Activated T-helper 2 cell treated with anti-CD3 and anti-CD28 coated beads, Interferon-gamma antibody, Interleukin-2, Interleukin-4, amounts not matched to agents 10 μg/mL and 5 μg/mL and 100 μg/mL, durations not matched to agents 14 hours and 24 hours and 36 hours (primary cell): ENCODE measurements at regions of chr10 and their contacts with region 1.

Region 1: GRCh38 chr10:12710594-12711349 is 290.7 kb downstream of the CCDC3 start:
- DNase-seq: peak; percentile 73
- H3K4me3 Mint-ChIP-seq: no peak overlapping the region
- H3K27ac Mint-ChIP-seq: peak overlapping the region; percentile 79
- H3K4me1 Mint-ChIP-seq: peaks cover 53% of the 10 kb centered on the region
- H3K27me3 Mint-ChIP-seq: no peaks in the 10 kb centered on the region

Region 2: DNA sequence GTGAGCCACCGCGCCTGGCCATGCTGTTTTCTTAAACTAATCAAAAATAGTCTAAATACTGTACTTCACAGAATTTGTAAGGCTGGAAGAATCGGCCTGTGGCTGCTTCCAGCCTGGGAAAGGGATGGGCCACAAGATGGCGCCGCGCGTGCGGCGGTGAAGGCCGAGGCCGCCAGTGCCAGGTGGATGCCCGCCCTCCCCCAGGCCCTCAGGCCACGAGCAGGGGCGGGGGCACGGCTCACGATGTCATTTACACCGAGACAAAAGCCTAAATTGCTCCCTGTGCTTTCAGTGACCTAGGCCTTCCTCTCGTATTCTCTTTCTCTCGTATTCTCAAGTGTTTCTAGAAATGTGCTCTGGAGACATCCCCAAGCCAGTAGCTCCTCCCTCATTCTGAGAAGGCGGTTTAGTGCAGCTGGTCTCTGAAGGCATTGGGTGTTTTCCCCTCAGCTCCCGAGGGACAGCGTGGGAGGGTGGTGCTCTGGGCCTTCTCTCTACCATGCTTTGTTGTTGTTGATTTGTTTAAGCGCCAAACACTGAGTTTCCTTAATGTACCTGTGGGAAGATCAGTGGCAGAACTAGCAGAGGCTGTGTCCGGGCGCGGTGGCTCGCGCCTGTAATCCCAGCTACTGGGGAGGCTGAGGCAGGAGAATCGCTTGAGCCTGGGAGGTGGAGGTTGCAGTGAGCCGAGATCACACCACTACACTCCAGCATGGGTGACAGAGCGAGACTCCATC is 446.4 kb before region 1 on chr10:
- intact Hi-C with region 1: loop called (anchors 1 kb)
- DNase-seq: peak; percentile 56
- H3K4me3 Mint-ChIP-seq: peak overlapping the region; percentile 75
- H3K27ac Mint-ChIP-seq: peak overlapping the region; percentile 85
- H3K4me1 Mint-ChIP-seq: peaks cover 17% of the 10 kb centered on the region
- H3K27me3 Mint-ChIP-seq: no peaks in the 10 kb centered on the region

Region 3: DNA sequence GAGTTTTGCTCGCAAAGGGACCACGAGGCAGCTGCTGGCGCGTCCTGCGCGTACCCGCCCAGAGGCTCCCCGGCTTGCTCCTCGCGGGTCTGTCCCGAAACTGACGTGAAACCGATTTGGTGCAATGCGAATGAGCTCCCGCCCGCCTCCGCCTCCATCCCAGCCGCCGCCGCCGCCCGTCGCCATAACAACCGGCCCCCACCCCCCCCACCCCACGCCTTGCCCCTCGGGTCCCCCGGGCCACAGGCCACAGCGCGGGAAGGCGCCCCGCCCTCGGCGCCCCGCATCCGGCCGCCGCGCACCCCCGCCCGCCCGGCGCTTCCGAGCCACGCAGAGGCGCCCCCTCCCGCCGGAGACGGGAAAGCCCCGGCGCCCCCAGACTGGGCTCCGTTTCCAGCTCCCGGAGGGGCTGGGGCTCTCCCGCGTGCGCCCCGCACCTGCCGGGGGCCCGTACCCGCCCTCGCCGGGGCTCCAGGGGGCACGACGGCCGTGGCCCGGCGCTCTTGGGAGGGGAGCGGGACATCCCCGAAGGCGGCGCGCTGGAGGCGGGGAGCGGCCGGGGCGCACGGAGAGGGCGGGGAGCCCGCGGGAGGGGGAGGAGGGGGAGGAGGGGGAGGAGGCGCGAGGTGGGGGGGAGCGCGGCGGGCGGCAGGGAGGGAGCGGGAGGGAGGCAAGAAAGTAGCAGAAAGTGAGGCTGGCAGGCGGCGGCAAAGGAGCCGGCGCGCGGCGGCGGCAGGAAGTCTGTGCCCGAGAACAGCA is 361.7 kb before region 1 on chr10 and contains the start of gene CAMK1D:
- intact Hi-C with region 1: loop called (anchors 1 kb)
- DNase-seq: peak; percentile 82
- H3K4me3 Mint-ChIP-seq: peak within 1 kb of the TSS; percentile 89
- H3K27ac Mint-ChIP-seq: peak within 1 kb of the TSS; percentile 90
- H3K4me1 Mint-ChIP-seq: peaks cover 21% of the 10 kb centered on the region
- H3K27me3 Mint-ChIP-seq: peaks cover 43% of the 10 kb centered on the region
- total RNA-seq, gene CAMK1D: 5.7 and 6.1 TPM in 2 replicates

Region 4: GRCh38 chr10:12638103-12638502 is 72.7 kb before region 1 on chr10:
- intact Hi-C with region 1: loop called (anchors 5 kb)
- DNase-seq: peak; percentile 28
- H3K4me3 Mint-ChIP-seq: no peak overlapping the region
- H3K27ac Mint-ChIP-seq: peak overlapping the region; percentile 29
- H3K4me1 Mint-ChIP-seq: peaks cover 45% of the 10 kb centered on the region
- H3K27me3 Mint-ChIP-seq: no peaks in the 10 kb centered on the region

Region 5: DNA sequence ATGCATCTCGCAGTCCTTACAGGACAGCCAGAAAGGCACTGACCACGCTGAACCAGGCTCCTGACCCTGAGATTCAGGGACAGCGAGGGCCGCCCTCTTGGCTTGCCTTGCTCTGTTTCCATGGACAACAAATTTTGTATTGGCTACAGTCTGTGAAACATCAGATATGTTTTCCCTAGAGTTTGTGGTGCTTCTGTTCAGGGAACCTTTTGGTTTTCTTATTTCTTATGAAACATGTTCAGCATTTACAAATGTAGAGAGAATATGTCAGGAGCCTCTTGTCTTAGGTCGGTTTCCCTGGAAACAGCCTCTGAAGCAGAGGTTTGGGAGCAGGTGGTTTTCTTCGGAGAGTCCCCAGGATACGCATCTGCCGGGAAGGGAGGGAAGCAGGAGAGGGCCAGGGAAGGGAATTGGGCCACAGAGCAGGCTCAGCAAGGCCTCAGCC is 30.6 kb after region 1 on chr10:
- intact Hi-C with region 1: no loop called
- DNase-seq: no peak
- H3K4me3 Mint-ChIP-seq: no peak overlapping the region
- H3K27ac Mint-ChIP-seq: no peak overlapping the region
- H3K4me1 Mint-ChIP-seq: no peaks in the 10 kb centered on the region
- H3K27me3 Mint-ChIP-seq: no peaks in the 10 kb centered on the region

Region 6: GRCh38 chr10:12902135-12902572 is 191.4 kb after region 1 on chr10:
- intact Hi-C with region 1: loop called (anchors 5 kb)
- DNase-seq: peak; percentile 12
- H3K4me3 Mint-ChIP-seq: no peak overlapping the region
- H3K27ac Mint-ChIP-seq: no peak overlapping the region
- H3K4me1 Mint-ChIP-seq: no peaks in the 10 kb centered on the region
- H3K27me3 Mint-ChIP-seq: no peaks in the 10 kb centered on the region

Region 7: GRCh38 chr10:13074561-13075451 is 364.0 kb after region 1 on chr10:
- intact Hi-C with region 1: loop called (anchors 2 kb)
- DNase-seq: peak; percentile 22
- H3K4me3 Mint-ChIP-seq: no peak overlapping the region
- H3K27ac Mint-ChIP-seq: no peak overlapping the region
- H3K4me1 Mint-ChIP-seq: peaks cover 6% of the 10 kb centered on the region
- H3K27me3 Mint-ChIP-seq: peaks cover 12% of the 10 kb centered on the region

Region 8: GRCh38 chr10:13099666-13100348 is 389.0 kb after region 1 on chr10 and contains the start of gene OPTN:
- intact Hi-C with region 1: loop called (anchors 5 kb)
- DNase-seq: peak; percentile 71
- H3K4me3 Mint-ChIP-seq: peak within 1 kb of the TSS; percentile 88
- H3K27ac Mint-ChIP-seq: peak within 1 kb of the TSS; percentile 86
- H3K4me1 Mint-ChIP-seq: peaks cover 44% of the 10 kb centered on the region
- H3K27me3 Mint-ChIP-seq: no peaks in the 10 kb centered on the region
- total RNA-seq, gene OPTN: 49.0 and 53.2 TPM in 2 replicates